Posterior vena cava (tissue), 2 donors: ENCODE measurements at regions of chr3 and their contacts with region 1.

Region 1: GRCh38 chr3:185164428-185165217 is 11.8 kb upstream of the C3orf70 start:
- DNase-seq: no peak

Region 2: DNA sequence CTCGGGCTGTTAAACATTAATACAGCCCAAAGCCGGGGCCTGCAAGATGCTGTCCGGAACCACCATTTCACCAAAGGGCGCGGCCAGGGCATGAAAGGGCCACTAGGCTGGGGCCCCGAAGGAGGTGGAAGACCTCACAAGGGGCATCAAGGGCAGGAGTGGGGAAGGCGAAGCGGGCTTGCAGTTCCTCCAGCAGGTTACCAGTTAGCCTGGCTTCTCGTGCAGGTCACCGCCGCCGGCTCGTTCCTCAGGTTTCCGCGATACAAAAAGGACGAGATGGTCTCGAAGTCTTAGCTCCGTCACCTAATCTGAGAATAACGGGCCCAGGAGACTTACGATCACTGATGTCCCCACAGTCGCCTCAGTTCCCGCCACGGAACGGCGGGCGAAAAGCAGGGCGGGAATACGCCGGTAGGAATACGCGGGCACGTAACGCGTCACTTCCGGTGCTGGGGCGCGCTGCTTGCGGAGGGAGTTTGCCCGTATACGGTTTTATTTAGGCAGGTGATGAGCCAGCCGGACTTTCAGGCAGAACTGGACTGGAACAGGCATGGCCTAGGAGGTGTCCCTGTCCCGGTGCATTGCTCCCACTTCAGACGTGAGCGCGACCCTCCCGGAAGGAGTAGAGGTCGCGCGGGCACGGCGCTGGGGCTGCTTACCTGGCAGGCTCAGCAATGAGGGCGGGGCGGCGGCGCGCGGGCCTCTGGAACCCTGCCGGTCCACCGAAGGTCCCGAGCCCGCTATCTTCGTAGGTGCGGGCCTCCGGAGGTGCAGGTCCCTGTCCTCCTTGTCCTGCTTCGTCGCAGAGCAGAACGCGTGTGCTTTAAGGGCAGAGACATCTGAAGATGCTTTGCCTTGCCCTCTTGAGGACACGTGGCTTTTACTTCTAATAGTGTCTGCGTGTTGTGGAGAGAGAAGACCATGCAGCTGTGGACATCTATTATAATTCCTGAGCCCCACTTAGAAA is 1641.7 kb after region 1 on chr3 and contains the start of gene RFC4:
- intact Hi-C with region 1: loop called in 1 of 2 experiments (anchors 5 kb)
- DNase-seq: peak; percentile 97
- total RNA-seq, gene RFC4: 10.9 to 12.4 TPM